PC-9 (cell line): ENCODE measurements at regions of chr6 and their contacts with region 1.

Region 1: DNA sequence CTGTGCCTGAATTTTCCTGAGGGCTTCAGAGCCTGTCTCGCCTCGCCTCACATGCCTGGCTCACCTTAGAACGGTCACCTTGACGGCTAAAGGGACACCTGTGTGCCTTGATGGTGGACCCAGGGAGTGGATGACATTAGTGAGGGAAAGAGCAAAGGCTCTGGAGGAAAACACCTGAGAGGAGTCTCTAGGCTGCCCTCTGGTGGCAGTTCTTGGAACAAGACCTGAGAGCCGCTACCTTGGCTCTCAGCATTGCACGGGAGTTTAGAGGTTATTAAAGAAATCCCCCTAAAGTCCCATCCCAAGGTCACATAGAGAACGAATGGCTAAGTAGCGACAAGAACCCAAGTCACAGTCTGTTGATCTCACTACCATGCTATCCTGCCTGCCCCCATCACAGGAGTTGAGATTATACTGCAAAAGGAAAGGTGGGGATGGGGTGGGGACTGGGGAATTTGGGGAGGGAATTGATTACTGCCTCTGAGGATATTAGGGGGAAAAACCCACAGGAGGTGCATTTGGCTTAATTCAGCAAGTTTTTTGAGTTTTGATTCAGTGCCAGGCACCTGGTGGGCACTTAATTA is 7.9 kb upstream of the CDSN start:
- DNase-seq: peak; percentile 45 to 66
- H3K4me3 ChIP-seq: no peak overlapping the region
- H3K27ac ChIP-seq: no peak overlapping the region
- H3K4me1 ChIP-seq: peaks cover 15% of the 10 kb centered on the region
- H3K27me3 ChIP-seq: no peaks in the 10 kb centered on the region
- CTCF ChIP-seq: peak; percentile 85

Region 2: GRCh38 chr6:31097568-31098053 is 30.6 kb before region 1 on chr6:
- CTCF ChIA-PET with region 1: interaction called, 5 read pairs
- POLR2A ChIA-PET with region 1: no interaction called
- intact Hi-C with region 1: loop called (anchors 1 kb)
- DNase-seq: peak in 1 of 2 experiments; percentile 36
- H3K4me3 ChIP-seq: no peak overlapping the region
- H3K27ac ChIP-seq: no peak overlapping the region
- H3K4me1 ChIP-seq: peaks cover 10% of the 10 kb centered on the region
- H3K27me3 ChIP-seq: no peaks in the 10 kb centered on the region
- CTCF ChIP-seq: no peak